ENCODE measurements at regions of chr7 and their contacts with region 1.

Region 1: GRCh38 chr7:105387621-105388372 is 924 bp downstream of the SRPK2 start:
- DNase-seq: peak; percentile 53 to 63
- ATAC-seq: peak; percentile 66 to 79 (median 73)
- H3K4me3 ChIP-seq: peak overlapping the region; percentile 48 to 98 (median 96)
- H3K27ac ChIP-seq: peak overlapping the region in 9 of 10 donors; percentile 3 to 90 (median 78)
- H3K4me1 ChIP-seq: peaks cover 0 to 20% (median 9%) of the 10 kb centered on the region in 9 donors
- H3K27me3 ChIP-seq: no peaks in the 10 kb centered on the region
- CTCF ChIP-seq: peak in 3 of 9 donors; percentile 16 to 28 (median 23)

Region 2: DNA sequence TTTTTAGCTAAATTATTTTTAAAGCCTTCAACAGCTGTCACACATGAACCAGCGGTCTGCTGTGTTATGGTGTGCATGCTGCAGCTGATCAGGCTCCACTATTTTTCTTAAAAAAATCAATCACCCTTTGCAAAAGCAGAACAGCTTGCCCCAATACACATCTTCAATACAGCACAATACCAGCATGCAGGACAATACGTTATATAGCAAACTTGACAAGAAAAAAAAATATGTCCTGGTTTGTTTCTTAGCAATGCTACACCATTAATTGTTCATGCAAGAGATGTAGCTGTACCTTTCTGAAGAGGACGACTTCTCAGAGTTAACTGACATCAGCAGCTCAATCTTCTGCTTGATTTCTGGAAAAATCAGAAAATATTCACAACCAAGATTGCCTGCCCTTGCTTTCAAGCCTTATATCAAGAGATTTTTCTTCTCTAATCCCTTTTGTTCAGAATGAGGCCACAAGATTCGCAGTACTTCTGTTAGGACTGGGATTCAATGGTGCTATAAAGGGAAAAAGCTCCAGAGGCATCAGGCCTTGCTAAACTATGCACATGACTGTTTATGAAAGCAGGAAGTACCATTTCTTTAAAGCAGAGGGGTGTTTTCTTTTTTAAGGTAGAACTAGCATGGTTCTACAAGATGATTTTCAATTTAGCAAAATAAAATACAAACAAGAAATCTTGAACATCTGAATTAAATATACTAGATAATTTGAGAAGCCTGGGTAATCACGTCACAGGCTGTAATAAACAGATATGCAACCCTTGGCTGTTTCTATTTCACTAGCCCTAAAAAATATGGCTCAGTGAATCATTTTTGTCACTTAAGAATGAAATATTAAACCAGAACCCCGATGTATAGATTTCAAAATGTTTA is 119.0 kb before region 1 on chr7:
- intact Hi-C with region 1: loop called in 1 of 10 experiments (anchors 10 kb)
- DNase-seq: peak in 1 of 2 donors; percentile 30
- ATAC-seq: peak; percentile 85 to 97 (median 92)
- H3K4me3 ChIP-seq: peak overlapping the region; percentile 26 to 57 (median 49)
- H3K27ac ChIP-seq: peak overlapping the region; percentile 3 to 83 (median 73)
- H3K4me1 ChIP-seq: peaks cover 0 to 44% (median 32%) of the 10 kb centered on the region in 9 donors
- H3K27me3 ChIP-seq: no peaks in the 10 kb centered on the region
- CTCF ChIP-seq: no peak

Region 3: GRCh38 chr7:105325216-105325904 is 62.4 kb before region 1 on chr7:
- intact Hi-C with region 1: loop called in 1 of 10 experiments (anchors 10 kb)
- DNase-seq: no peak
- ATAC-seq: no peak
- H3K4me3 ChIP-seq: no peak overlapping the region
- H3K27ac ChIP-seq: no peak overlapping the region
- H3K4me1 ChIP-seq: peaks cover 0 to 24% (median 0%) of the 10 kb centered on the region in 9 donors
- H3K27me3 ChIP-seq: no peaks in the 10 kb centered on the region
- CTCF ChIP-seq: no peak

Region 4: GRCh38 chr7:105352018-105352612 is 35.7 kb before region 1 on chr7:
- intact Hi-C with region 1: loop called in 1 of 10 experiments (anchors 5 kb)
- DNase-seq: peak; percentile 69 to 70
- ATAC-seq: peak; percentile 82 to 92 (median 90)
- H3K4me3 ChIP-seq: peak overlapping the region in 1 of 10 donors; percentile 7
- H3K27ac ChIP-seq: peak overlapping the region in 7 of 10 donors; percentile 40 to 84 (median 52)
- H3K4me1 ChIP-seq: peaks cover 18 to 60% (median 37%) of the 10 kb centered on the region in 9 donors
- H3K27me3 ChIP-seq: no peaks in the 10 kb centered on the region
- CTCF ChIP-seq: no peak